Right ventricle myocardium inferior (tissue), 1 donor: ENCODE measurements at regions of chr9 and their contacts with region 1.

Region 1: GRCh38 chr9:114033397-114034103 is 44.5 kb downstream of the AMBP start:
- DNase-seq: no peak
- ATAC-seq: peak; percentile 63

Region 2: GRCh38 chr9:113568571-113569321 is 464.8 kb before region 1 on chr9:
- intact Hi-C with region 1: no loop called
- DNase-seq: no peak
- ATAC-seq: peak; percentile 41

Region 3: DNA sequence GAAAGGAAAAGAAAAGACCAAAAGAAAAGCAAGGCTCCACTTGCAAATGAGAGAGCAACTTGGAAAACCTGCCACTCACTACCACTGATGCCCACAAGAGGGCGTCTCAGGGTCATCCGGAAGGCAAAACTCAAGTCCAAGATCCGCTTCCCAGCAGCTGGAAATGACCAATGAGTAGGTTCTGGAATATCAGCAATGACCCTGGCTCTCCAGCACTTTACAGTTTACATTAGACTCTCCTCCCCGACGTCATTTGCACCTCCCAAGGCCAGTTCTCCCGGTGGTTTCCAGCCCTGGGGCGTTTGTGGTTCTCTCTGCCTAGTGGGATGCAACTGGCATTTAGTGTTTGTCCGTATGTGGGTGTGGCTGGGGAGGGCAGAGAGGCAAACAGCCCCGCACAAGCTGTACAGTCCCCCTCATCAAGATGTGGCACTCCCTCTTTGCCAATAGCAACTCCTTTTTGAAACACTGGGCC is 351.2 kb before region 1 on chr9:
- intact Hi-C with region 1: loop called (anchors 5 kb)
- DNase-seq: peak; percentile 78
- ATAC-seq: no peak

Region 4: DNA sequence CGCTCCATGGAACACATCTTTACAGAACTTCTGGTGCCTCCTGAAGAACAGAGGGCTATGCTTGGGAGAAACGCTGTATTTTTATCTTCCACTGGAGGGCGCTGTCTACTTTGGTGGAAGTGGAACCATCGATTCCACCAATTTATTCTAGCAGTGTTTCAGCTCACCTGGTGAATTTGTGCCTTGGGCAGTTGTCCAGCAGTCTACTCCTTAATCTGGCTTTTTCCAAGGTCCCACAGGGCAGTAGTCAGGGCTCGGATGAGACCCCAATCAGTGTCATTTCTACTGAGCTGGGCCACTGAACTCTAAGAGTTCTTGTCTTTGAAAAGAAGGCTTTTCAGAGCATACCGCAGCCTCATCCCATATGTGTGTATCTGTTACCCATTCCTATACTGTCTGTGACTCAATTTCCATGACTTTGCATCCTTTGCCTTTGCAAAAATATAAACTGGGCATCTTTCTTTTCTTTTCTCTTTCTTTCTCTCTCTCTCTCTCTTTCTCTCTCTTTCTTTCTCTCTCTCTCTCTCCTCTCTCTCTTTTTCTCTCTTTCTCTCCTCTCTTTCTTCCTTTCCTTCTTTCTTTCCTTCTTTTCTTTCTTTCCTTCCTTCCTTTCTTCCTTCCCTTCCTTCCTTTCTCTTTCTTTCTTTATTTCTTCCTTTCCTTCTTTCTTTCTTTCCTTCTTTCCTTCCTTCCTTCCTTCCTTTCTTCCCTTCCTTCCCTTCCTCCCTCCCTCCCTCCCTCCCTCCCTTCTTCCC is 295.9 kb before region 1 on chr9:
- intact Hi-C with region 1: loop called (anchors 5 kb)
- DNase-seq: no peak
- ATAC-seq: no peak

Region 5: DNA sequence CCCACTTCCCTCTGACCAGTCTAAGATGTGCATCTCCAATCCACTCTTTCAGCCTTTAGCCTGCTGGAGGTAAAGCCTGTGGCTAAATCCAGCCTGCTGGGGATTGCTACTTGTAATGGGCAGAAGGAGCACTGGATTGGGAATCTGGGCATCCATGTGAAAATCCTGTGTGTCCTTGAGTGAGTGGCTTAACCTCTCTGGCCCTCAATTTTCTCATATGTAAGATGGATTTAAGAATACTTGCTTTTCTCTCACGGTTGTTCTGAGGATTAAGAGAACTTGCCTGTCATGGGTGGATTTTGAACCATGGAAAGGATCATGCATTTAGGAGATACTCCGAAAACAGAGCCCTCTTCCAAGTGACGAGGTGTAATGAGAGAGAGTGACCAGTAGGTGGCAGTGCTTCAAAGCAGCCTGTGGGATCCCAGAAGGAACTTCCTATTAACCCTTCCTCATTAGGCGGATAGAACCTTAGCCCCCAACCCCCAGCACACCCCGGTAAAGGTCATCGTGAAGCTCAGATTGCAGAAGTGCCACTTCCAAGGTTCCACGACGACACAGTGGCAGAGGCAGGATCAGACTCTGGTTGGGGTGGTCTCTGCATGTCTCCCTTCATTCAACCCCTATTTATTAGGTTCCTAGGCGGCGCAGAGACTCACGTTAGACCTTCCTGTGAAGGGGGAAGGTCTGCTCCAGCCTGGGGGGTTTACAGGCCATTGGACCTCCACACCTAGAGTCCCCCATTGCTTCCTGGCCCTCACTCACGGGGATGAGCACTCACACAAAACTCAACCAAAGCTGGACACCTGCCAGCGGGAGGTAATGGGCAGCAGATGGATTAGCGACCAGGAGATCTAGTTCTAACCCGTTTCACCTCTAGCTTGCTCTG is 226.1 kb before region 1 on chr9:
- intact Hi-C with region 1: loop called (anchors 1 kb)
- DNase-seq: no peak
- ATAC-seq: peak; percentile 79

Region 6: GRCh38 chr9:113886466-113886865 is 147.1 kb before region 1 on chr9:
- intact Hi-C with region 1: loop called (anchors 10 kb)
- DNase-seq: no peak
- ATAC-seq: no peak